GM23248 (cell line): ENCODE measurements at regions of chr3 and their contacts with region 1.

Region 1: DNA sequence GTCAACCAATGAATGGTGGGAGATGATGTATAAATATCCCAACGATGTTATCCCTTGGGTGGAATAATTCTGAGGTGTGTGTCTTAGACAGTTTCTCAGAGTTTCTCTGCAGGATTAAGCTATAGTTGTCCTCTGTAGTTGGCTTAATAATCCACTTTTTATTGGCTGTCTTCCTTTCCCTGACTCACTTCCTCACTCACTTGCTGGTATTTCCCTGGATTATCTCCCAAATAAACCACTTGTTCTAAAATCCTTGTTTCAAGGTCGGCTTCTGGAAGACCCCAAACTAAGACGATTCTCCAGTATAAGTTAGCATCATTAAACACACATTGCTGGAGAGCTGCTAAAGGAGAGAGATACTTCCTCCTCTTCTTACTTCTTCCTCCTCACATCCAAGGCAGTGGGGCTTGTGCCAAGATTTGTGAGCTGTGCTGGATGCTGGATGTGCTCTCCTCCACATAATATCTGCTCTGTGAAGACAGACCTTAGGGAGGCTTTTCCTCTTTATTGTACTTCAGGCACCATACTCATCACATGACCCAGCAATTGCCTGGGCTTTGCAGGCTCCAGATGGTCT is 22.5 kb upstream of the ROPN1 start:
- DNase-seq: peak; percentile 60
- H3K4me3 ChIP-seq: no peak overlapping the region
- H3K27ac ChIP-seq: no peak overlapping the region
- H3K4me1 ChIP-seq: peaks cover 11% of the 10 kb centered on the region; the same call in 1 of the 2 replicates
- H3K27me3 ChIP-seq: 0 out of 2 replicates have a peak, but pooled peaks cover 12% of the 10 kb centered on the region

Region 2: GRCh38 chr3:124467980-124468902 is 453.8 kb after region 1 on chr3:
- in situ Hi-C with region 1: loop called (anchors 10 kb)
- DNase-seq: peak; percentile 51
- H3K4me3 ChIP-seq: no peak overlapping the region
- H3K27ac ChIP-seq: no peak overlapping the region
- H3K4me1 ChIP-seq: no peaks in the 10 kb centered on the region
- H3K27me3 ChIP-seq: peaks cover 7% of the 10 kb centered on the region; the same call in 1 of the 2 replicates